GM10248 (cell line): ENCODE measurements at regions of chr17 and their contacts with region 1.

Region 1: GRCh38 chr17:79414063-79414792 is 196.6 kb downstream of the RBFOX3 start:
- DNase-seq: no peak
- CTCF ChIP-seq: no peak

Region 2: DNA sequence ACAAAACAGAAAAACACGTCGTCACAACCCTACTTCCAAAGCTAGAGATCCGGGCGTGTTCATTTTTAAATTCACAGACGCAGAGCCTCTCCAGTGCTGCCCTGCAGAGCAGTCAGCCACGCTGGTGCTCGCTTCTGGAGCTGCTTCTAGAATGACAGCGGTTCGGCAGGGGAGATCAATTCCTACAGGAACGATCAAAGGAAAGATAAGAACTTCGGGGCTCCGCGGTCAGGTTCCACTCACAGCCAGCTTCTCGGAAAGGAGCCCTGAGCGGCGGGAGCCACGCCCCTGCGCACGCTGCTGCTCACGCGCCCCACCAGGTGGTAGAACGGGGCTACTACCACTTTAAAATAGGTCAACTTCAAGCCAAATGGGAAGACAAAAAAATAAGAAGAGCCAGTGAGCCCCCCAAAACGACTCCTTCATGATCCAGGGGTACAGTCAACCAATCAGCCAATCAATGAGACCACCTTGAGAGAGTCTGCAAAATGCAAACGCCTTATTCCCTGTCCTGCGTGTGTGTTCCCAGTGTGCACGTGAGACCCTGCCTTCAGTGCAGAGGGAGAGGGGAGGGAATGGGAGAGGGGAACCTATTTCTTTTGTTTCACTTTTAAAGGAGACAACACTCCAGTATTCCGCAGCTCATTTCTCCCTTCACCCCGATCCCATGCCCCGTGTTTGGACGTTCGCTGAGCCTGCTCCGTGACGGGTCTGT is 13.1 kb before region 1 on chr17:
- CTCF ChIA-PET with region 1: interaction called, 28 read pairs
- POLR2A ChIA-PET with region 1: no interaction called
- DNase-seq: peak; percentile 89
- CTCF ChIP-seq: peak; percentile 89